Mammary epithelial cell (primary cell): ENCODE measurements at regions of chr10 and their contacts with region 1.

Region 1: DNA sequence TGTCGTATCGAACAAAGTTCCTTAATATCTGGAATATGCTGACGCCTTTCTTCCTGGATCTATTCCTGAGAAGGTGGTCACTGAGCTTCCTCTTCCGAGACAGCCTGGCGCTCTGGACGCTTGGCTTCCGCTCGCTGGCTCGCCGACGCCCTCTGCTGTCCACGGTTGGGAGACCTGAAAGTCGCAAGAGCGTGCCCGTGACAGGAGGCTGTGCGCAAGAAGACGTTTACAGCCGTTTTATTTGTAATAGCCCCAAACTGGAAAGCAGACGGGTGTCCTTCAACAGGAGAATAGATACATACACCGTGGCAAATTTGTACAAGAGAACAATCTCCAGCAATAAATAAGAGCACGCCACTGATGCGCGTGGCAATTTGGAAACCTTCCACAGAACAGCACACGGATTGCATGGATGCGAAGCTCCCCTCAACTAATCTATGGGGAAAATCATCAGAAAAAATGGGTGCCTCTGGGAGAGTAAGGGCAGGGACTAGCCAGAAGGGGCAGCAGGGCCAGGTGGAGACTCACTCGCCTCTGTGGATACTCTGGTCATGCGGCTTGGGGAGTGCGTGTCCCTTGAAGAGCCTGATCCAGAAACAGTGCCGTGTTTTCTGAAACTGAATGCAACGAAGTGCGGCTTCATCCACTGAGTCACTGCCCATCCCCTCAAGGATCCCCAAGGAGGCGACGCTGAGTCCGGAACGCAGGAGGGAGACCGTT is 41.5 kb upstream of the BNIP3 start:
- DNase-seq: peak; percentile 52
- H3K4me3 ChIP-seq: peak overlapping the region; percentile 2 to 34 (median 32)
- H3K27ac ChIP-seq: no peak overlapping the region
- H3K4me1 ChIP-seq: peaks cover 4% of the 10 kb centered on the region
- H3K27me3 ChIP-seq: no peaks in the 10 kb centered on the region
- CTCF ChIP-seq: peak; percentile 69 to 92

Region 2: GRCh38 chr10:131943021-131943814 is 80.0 kb before region 1 on chr10:
- CTCF ChIA-PET with region 1: no interaction called
- dilution Hi-C with region 1: no loop called
- in situ Hi-C with region 1: no loop called
- intact Hi-C with region 1: loop called (anchors 1 kb)
- DNase-seq: no peak
- H3K4me3 ChIP-seq: no peak overlapping the region
- H3K27ac ChIP-seq: no peak overlapping the region
- H3K4me1 ChIP-seq: peaks cover 16% of the 10 kb centered on the region
- H3K27me3 ChIP-seq: no peaks in the 10 kb centered on the region
- CTCF ChIP-seq: peak; percentile 39 to 61

Region 3: DNA sequence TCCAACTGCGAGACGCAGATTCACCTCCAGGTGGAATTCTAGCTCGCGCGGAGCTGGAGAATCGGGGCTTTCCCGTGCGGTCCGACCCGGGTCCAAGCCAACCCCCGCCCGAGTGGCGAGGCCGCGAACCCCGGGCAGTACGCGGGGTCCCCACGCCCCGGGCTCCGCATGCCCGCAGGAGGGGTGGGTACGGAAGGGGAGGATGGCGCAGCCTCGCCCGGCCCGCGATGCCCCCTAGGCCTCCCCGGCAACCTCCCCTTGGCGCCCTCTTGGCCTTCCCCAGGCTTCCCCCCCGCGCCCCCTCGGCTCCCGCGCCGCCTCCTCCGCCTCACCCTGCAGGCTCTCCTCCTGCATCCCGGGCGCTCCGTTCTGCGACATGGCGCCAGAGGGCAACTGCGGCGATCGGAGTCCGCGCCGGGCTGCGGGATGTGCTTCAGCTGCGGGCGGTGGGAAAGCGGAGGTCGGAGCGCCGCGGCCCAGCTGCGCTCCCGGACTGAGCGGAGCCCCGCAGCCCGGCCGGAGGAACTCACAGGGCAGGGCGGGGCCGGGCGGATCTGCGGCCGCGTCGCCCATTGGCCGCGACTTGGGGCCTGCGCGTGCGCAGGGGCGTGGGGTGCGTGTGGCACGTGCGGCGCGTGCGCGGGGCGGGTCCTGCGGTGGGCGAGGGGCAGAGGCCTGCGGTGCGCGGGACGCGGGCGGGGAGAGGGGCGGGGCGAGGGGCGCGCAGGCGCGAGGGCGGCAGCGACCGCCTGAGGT is 41.6 kb before region 1 on chr10 and contains the start of gene BNIP3:
- CTCF ChIA-PET with region 1: no interaction called
- dilution Hi-C with region 1: loop called (anchors 5 kb)
- in situ Hi-C with region 1: no loop called
- intact Hi-C with region 1: loop called (anchors 2 kb)
- DNase-seq: peak; percentile 89
- H3K4me3 ChIP-seq: peak within 1 kb of the TSS; percentile 58 to 90 (median 79)
- H3K27ac ChIP-seq: peak within 1 kb of the TSS; percentile 64
- H3K4me1 ChIP-seq: peaks cover 14% of the 10 kb centered on the region
- H3K27me3 ChIP-seq: no peaks in the 10 kb centered on the region
- CTCF ChIP-seq: peak in 1 of 2 donors; percentile 26
- total RNA-seq, gene BNIP3: 50.8 to 65.2 TPM

Region 4: DNA sequence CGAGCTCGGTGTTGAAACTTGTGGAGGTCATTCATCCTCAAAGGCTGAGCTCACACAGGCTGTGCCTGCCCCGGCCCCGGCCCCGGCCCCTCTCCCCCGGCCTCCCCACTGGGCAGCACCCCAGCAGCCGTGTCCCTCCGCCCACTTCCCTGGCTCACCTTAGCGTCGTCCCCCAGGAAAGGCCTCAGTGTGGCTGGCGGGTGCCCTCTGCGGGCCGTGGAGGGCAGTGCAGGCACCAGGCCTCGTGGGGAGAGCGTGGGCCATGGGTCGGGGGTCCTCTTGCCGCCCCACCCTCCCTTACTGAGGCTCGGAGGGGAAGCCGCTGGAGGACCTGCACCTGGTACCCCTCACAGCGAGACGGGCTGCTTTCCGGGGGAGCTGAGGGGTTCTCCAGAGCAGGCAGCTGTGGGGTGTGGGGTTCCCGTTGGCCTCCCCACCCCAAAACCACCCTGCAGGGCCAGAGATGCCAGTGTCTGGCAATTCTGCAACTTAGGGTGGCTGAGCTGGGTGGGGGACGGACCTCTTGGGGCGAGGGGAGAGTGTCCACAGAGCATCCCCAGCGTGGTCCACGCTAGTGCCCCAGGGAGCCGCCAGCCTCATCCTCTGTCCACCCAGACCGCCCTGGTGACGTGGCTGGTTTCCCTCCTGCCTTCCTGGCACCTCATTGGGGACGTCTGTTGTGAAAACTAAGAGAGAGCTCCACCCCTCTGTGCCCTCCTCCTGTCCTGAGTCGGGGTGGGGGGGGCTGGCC is 119.3 kb after region 1 on chr10:
- CTCF ChIA-PET with region 1: no interaction called
- dilution Hi-C with region 1: no loop called
- in situ Hi-C with region 1: no loop called
- intact Hi-C with region 1: loop called (anchors 2 kb)
- DNase-seq: peak; percentile 8
- H3K4me3 ChIP-seq: no peak overlapping the region
- H3K27ac ChIP-seq: no peak overlapping the region
- H3K4me1 ChIP-seq: no peaks in the 10 kb centered on the region
- H3K27me3 ChIP-seq: no peaks in the 10 kb centered on the region
- CTCF ChIP-seq: peak; percentile 70 to 83

Region 5: GRCh38 chr10:132223156-132223590 is 199.9 kb after region 1 on chr10:
- CTCF ChIA-PET with region 1: no interaction called
- dilution Hi-C with region 1: no loop called
- in situ Hi-C with region 1: no loop called
- intact Hi-C with region 1: no loop called
- DNase-seq: peak; percentile 55
- H3K4me3 ChIP-seq: no peak overlapping the region
- H3K27ac ChIP-seq: no peak overlapping the region
- H3K4me1 ChIP-seq: no peaks in the 10 kb centered on the region
- H3K27me3 ChIP-seq: no peaks in the 10 kb centered on the region
- CTCF ChIP-seq: peak; percentile 97 to 99